ENCODE measurements at regions of chr11 and their contacts with region 1.

Region 1: DNA sequence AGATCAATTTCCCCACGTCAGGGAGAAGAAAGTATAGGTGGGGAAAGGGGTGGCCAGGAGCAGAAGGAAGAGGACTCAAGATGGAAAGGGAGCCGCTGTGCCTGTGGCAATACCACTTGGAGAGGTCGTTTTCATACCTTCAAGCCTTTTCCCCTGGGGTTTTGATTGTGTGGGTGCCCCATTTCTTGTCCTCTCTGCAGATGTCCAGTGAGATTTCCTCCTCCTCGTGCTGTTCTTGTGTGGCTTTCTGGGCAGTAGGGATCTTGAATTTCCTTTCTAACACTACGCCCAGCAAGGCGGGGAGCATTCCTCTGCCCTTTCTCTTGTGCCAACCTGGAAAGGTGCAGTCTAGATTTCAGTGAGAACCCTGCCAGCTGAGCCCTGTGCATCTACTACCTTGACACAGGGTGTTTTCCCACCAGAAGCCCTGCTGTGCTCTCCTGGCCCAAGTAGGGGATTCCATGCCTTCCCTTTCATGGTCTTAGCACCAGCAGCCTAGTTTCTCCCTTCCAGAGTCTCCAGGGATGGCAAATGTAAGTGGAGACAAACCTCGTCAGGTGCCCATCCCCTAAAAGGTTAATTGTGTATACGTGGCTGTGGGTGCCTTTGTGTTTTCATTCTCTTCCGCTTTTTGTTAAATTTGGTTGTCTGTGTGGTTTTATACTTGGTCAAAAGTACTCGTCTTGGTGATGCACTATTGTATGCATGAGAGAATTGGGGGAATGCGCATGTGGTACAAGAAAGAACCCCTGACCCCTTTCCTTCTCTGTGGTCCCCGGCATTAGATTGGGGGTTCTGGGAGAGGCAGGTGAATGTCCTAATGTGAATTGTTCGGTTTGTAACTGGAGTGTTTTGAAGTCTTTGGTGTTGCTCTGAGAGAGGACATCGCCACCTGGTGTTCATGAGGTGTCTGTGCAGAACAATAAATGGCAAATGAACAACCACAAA is 71.4 kb upstream of the MPEG1 start:
- DNase-seq: peak; percentile 31 to 52 (median 40)
- ATAC-seq: peak; percentile 83
- H3K4me3 ChIP-seq: no peak overlapping the region
- H3K27ac ChIP-seq: no peak overlapping the region
- H3K4me1 ChIP-seq: no peaks in the 10 kb centered on the region
- H3K27me3 ChIP-seq: no peaks in the 10 kb centered on the region
- CTCF ChIP-seq: peak; percentile 67 to 78 (median 75)
- EP300 ChIP-seq: no peak
- POLR2A ChIP-seq: no peak
- RAD21 ChIP-seq: peak; percentile 54 to 72

Region 2: GRCh38 chr11:59207988-59208451 is 76.1 kb before region 1 on chr11:
- CTCF ChIA-PET with region 1: no interaction called
- POLR2A ChIA-PET with region 1: no interaction called
- in situ Hi-C with region 1: no loop called
- intact Hi-C with region 1: loop called (anchors 1 kb)
- DNase-seq: peak; percentile 30 to 56 (median 40)
- ATAC-seq: peak; percentile 82
- H3K4me3 ChIP-seq: no peak overlapping the region
- H3K27ac ChIP-seq: no peak overlapping the region
- H3K4me1 ChIP-seq: no peaks in the 10 kb centered on the region
- H3K27me3 ChIP-seq: peaks cover 4 to 37% of the 10 kb centered on the region in 2 experiments; a peak in 3 of 5 replicates
- CTCF ChIP-seq: peak; percentile 71 to 76 (median 71)
- EP300 ChIP-seq: no peak
- POLR2A ChIP-seq: no peak
- RAD21 ChIP-seq: peak; percentile 43 to 63

Region 3: GRCh38 chr11:59355226-59355625 is 71.1 kb after region 1 on chr11:
- CTCF ChIA-PET with region 1: no interaction called
- POLR2A ChIA-PET with region 1: no interaction called
- in situ Hi-C with region 1: no loop called
- intact Hi-C with region 1: no loop called
- DNase-seq: no peak
- ATAC-seq: no peak
- H3K4me3 ChIP-seq: no peak overlapping the region
- H3K27ac ChIP-seq: no peak overlapping the region
- H3K4me1 ChIP-seq: no peaks in the 10 kb centered on the region
- H3K27me3 ChIP-seq: no peaks in the 10 kb centered on the region
- CTCF ChIP-seq: no peak
- EP300 ChIP-seq: no peak
- POLR2A ChIP-seq: no peak
- RAD21 ChIP-seq: no peak